ENCODE measurements at regions of chr20 and their contacts with region 1.

Region 1: GRCh38 chr20:44683263-44684046 is 31.7 kb upstream of the CCN5 start:
- DNase-seq: peak in 37 of 42 donors; percentile 19 to 80 (median 64)

Region 2: GRCh38 chr20:44326391-44327159 is 356.9 kb before region 1 on chr20:
- intact Hi-C with region 1: no loop called
- DNase-seq: no peak

Region 3: DNA sequence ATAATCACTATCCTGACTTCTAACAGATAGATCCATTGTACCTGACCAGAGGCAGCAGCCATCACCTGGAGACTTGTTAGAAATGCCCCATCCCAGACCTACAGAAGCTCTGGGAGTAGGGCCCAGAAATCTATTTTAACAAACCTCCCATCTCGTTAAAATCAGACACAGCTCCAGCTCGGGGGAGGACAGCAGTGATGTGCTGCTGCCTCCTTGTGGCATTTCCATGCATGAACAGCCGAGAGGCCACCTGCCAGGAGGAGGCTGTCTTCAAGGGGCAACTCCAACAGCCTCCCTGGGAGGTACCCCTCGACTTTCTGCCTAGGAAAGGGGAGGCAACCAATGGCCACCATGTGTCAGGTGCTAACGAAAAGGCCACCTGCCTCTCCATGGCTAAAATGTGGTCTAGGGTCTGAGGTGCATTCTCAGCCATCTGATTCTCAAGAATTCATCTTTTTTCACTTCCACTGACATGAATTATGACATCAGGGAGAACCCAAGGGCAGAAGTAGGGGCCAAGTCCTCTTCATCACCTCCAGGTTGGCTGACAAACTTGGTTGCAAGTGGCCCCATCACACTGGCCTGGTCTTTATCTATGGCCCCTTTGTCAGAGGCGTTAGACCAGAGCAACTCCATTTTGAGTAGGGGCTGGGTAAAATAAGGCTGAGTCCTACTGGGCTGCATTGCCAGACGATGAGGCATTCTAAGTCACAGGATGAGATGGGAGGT is 50.0 kb after region 1 on chr20:
- intact Hi-C with region 1: loop called (anchors 2 kb)
- DNase-seq: peak; percentile 66 to 93 (median 84)

Measured in head of caudate nucleus (tissue), 42 donors.